Right ventricle myocardium inferior (tissue), 1 donor: ENCODE measurements at regions of chr15 and their contacts with region 1.

Region 1: GRCh38 chr15:40310001-40310959 is 2.5 kb upstream of the PLCB2 start:
- DNase-seq: peak; percentile 81
- ATAC-seq: peak; percentile 74

Region 2: GRCh38 chr15:40217159-40217824 is 93.0 kb before region 1 on chr15:
- intact Hi-C with region 1: loop called (anchors 5 kb)
- DNase-seq: no peak
- ATAC-seq: peak; percentile 80